Spleen (tissue), 13 donors: ENCODE measurements at regions of chr1 and their contacts with region 1.

Region 1: DNA sequence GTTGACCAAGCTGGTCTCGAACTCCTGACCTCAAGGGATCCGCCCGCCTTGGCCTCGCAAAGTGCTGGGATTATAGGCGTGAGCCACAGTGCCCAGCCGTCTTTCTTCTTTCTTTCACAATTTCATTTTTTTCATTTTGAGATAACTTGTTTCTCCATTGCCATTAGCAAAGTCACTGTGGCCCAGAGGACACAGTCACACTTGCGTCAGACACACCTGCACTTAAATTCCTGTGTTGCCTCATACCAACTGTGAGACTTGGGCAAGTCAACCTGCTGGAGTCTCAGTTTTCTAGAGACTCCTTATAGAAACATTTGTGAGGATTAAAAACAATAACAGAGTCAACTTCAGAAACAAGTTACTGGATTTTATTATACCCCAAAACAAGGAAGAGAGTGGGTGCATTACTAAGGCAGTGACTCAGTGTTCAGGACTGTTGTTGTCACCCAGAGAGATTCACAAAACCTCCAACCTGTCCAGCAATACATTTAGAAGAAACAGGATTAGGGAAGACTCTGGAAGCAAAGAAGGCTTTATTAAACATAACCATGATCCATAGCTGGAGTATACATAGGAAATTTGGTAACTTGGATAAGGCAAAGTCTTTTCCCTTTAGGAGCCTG is 2.6 kb downstream of the TEDDM1 start:
- DNase-seq: no peak
- H3K4me3 ChIP-seq: no peak overlapping the region
- H3K27ac ChIP-seq: peak overlapping the region in 5 of 8 donors; percentile 13 to 98 (median 49)
- H3K4me1 ChIP-seq: peaks cover 0 to 44% (median 23%) of the 10 kb centered on the region in 6 donors
- H3K27me3 ChIP-seq: peaks cover 0 to 6% (median 0%) of the 10 kb centered on the region in 7 donors
- CTCF ChIP-seq: no peak
- POLR2A ChIP-seq: no peak

Region 2: GRCh38 chr1:182084487-182085316 is 313.2 kb before region 1 on chr1:
- intact Hi-C with region 1: loop called (anchors 5 kb)
- DNase-seq: peak; percentile 93
- H3K4me3 ChIP-seq: no peak overlapping the region
- H3K27ac ChIP-seq: peak overlapping the region in 4 of 8 donors; percentile 49 to 74 (median 61)
- H3K4me1 ChIP-seq: peaks cover 4 to 37% (median 21%) of the 10 kb centered on the region in 6 donors
- H3K27me3 ChIP-seq: no peaks in the 10 kb centered on the region
- CTCF ChIP-seq: peak; percentile 74 to 94 (median 87)
- POLR2A ChIP-seq: no peak

Region 3: DNA sequence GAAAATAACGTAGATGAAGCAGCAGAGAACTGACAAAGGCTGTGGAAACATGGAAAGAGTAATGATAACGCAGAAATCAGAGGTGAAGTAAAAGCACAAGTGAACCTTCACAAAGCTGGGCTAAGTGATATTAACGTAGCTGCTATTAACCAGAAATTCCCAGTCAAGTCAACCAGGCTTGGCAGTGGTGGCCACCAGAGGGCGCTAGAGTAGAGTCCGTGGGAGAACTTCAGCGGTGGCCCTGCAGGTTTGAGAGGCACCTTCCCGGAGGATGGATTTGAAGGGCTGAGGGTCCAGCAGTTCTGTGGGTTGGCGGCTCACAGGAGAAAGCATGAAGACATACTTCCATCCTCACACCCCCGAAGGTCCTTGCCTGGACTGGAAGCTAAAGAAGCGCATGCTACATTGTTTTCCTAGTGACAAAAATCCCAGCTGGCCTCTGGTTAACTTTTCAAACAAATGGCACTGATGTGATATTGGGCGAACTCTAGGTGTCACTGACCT is 254.7 kb before region 1 on chr1:
- intact Hi-C with region 1: loop called (anchors 2 kb)
- DNase-seq: peak; percentile 97
- H3K4me3 ChIP-seq: peak overlapping the region in 1 of 8 donors; percentile 62
- H3K27ac ChIP-seq: peak overlapping the region; percentile 72 to 94 (median 90)
- H3K4me1 ChIP-seq: peaks cover 15 to 55% (median 34%) of the 10 kb centered on the region in 6 donors
- H3K27me3 ChIP-seq: no peaks in the 10 kb centered on the region
- CTCF ChIP-seq: peak; percentile 76 to 97 (median 93)
- POLR2A ChIP-seq: no peak